ENCODE measurements at regions of chr1 and their contacts with region 1.

Region 1: DNA sequence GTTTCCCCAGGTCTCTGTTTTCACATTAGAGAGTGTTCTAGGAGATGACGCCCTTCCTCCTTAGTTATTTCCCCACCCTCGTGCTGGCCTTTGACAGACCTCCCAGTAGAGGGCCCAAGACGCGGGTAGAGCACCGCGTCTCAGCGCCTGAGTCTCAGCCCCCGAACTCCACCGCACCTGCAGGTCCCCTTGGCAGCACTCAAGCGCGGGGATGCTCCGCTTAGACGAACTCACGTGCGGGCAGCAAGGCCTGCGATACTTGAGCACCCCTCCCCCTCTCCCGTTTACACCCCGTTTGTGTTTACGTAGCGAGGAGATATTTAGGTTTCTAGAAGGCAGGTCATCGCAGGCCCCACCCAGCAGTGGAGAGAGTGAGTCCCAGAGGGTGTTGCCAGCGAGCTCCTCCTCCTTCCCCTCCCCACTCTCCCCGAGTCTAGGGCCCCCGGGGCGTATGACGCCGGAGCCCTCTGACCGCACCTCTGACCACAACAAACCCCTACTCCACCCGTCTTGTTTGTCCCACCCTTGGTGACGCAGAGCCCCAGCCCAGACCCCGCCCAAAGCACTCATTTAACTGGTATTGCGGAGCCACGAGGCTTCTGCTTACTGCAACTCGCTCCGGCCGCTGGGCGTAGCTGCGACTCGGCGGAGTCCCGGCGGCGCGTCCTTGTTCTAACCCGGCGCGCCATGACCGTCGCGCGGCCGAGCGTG is at the start of gene CD55:
- DNase-seq: peak; percentile 97 to 100 (median 97)
- ATAC-seq: peak; percentile 95
- H3K4me3 ChIP-seq: peak within 1 kb of the TSS; percentile 91
- H3K27ac ChIP-seq: peak within 1 kb of the TSS; percentile 97
- H3K4me1 ChIP-seq: peaks cover 33 to 39% of the 10 kb centered on the region in 2 experiments
- H3K27me3 ChIP-seq: no peaks in the 10 kb centered on the region
- CTCF ChIP-seq: peak; percentile 60 to 74 (median 62)
- EP300 ChIP-seq: peak; percentile 66
- POLR2A ChIP-seq: peak; percentile 96
- RAD21 ChIP-seq: peak; percentile 38 to 45
- polyA plus RNA-seq, gene CD55: 17.7 to 29.4 TPM

Region 2: GRCh38 chr1:207084701-207085180 is 236.5 kb before region 1 on chr1:
- CTCF ChIA-PET with region 1: interaction called, 4 read pairs
- POLR2A ChIA-PET with region 1: no interaction called
- in situ Hi-C with region 1: no loop called
- intact Hi-C with region 1: loop called (anchors 5 kb)
- DNase-seq: peak; percentile 77 to 95 (median 86)
- ATAC-seq: peak; percentile 98
- H3K4me3 ChIP-seq: no peak overlapping the region
- H3K27ac ChIP-seq: peak overlapping the region; percentile 20; the same call in 2 of the 3 replicates
- H3K4me1 ChIP-seq: peaks cover 0 to 15% of the 10 kb centered on the region in 2 experiments; a peak in 4 of 5 replicates
- H3K27me3 ChIP-seq: no peaks in the 10 kb centered on the region
- CTCF ChIP-seq: peak; percentile 86 to 87 (median 87)
- EP300 ChIP-seq: peak; percentile 75
- POLR2A ChIP-seq: no peak
- RAD21 ChIP-seq: peak; percentile 98 to 99

Region 3: DNA sequence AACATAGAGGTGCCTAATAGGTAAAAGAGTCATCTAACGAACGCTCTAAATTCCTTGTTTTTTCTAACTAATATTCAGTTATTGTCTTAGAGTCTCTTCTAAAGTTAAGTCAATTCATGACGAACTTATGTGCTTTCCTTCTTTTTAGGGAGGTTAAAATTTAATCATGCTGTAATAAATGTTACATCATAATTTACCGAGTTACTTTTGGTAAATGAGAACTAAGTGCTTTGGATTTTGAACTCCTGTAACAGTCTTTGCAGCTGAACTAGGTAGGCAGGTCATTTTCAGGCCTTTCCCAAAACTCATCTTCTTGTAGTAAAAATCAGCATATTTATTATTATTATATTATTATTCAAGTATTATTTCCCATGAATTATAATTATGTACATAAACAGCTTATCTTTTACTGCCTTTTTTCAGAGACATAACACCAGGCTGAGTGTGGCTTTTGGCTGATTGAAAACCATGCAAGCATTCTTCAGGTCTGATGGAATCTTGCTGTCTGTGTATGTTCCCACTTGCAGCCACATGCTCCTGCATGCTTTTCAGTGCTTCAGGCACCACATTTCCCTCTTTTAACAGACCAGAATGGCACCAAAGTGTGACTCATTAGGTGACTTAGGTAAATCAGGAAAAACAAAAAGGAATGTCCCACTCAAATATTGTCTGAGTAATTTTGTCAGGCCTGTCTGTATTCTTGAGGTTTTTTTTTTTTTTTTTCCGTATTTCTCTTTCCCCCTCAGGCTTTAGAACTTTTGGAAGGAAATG is 80.7 kb before region 1 on chr1:
- CTCF ChIA-PET with region 1: no interaction called
- POLR2A ChIA-PET with region 1: no interaction called
- in situ Hi-C with region 1: no loop called
- intact Hi-C with region 1: loop called (anchors 2 kb)
- DNase-seq: no peak
- ATAC-seq: peak; percentile 28; the same call in 2 of the 3 replicates
- H3K4me3 ChIP-seq: no peak overlapping the region
- H3K27ac ChIP-seq: no peak overlapping the region
- H3K4me1 ChIP-seq: peaks cover 6 to 22% of the 10 kb centered on the region in 2 experiments; a peak in 4 of 5 replicates
- H3K27me3 ChIP-seq: no peaks in the 10 kb centered on the region
- CTCF ChIP-seq: no peak
- EP300 ChIP-seq: 0 out of 2 replicates have a peak, but pooled peaks have one; percentile 22
- POLR2A ChIP-seq: no peak
- RAD21 ChIP-seq: no peak

Region 4: GRCh38 chr1:207336559-207337467 is 15.6 kb after region 1 on chr1:
- CTCF ChIA-PET with region 1: no interaction called
- POLR2A ChIA-PET with region 1: interaction called, 78 read pairs
- in situ Hi-C with region 1: no loop called
- intact Hi-C with region 1: no loop called
- DNase-seq: no peak
- ATAC-seq: peak; percentile 27
- H3K4me3 ChIP-seq: no peak overlapping the region
- H3K27ac ChIP-seq: no peak overlapping the region
- H3K4me1 ChIP-seq: no peaks in the 10 kb centered on the region
- H3K27me3 ChIP-seq: no peaks in the 10 kb centered on the region
- CTCF ChIP-seq: no peak
- EP300 ChIP-seq: no peak
- POLR2A ChIP-seq: no peak; the same call in 1 of the 2 replicates
- RAD21 ChIP-seq: no peak

Region 5: GRCh38 chr1:207414606-207415108 is 93.4 kb after region 1 on chr1:
- CTCF ChIA-PET with region 1: no interaction called
- POLR2A ChIA-PET with region 1: no interaction called
- in situ Hi-C with region 1: no loop called
- intact Hi-C with region 1: no loop called
- DNase-seq: no peak
- ATAC-seq: no peak
- H3K4me3 ChIP-seq: no peak overlapping the region
- H3K27ac ChIP-seq: no peak overlapping the region
- H3K4me1 ChIP-seq: no peaks in the 10 kb centered on the region
- H3K27me3 ChIP-seq: no peaks in the 10 kb centered on the region
- CTCF ChIP-seq: no peak
- EP300 ChIP-seq: no peak
- POLR2A ChIP-seq: no peak
- RAD21 ChIP-seq: no peak

Region 6: GRCh38 chr1:207698822-207699483 is 377.7 kb after region 1 on chr1:
- CTCF ChIA-PET with region 1: no interaction called
- POLR2A ChIA-PET with region 1: no interaction called
- in situ Hi-C with region 1: no loop called
- intact Hi-C with region 1: loop called (anchors 5 kb)
- DNase-seq: peak; percentile 30 to 87 (median 37)
- ATAC-seq: peak; percentile 92
- H3K4me3 ChIP-seq: no peak overlapping the region
- H3K27ac ChIP-seq: no peak overlapping the region
- H3K4me1 ChIP-seq: no peaks in the 10 kb centered on the region
- H3K27me3 ChIP-seq: no peaks in the 10 kb centered on the region
- CTCF ChIP-seq: peak; percentile 76 to 98 (median 95)
- EP300 ChIP-seq: no peak
- POLR2A ChIP-seq: no peak
- RAD21 ChIP-seq: peak; percentile 96 to 97